Activated CD4-positive, alpha-beta memory T cell treated with anti-CD3 and anti-CD28 coated beads, Interleukin-2, amount 10 ng/mL, durations not matched to agents 7 days and 5 days (primary cell): ENCODE measurements at regions of chr22 and their contacts with region 1.

Region 1: DNA sequence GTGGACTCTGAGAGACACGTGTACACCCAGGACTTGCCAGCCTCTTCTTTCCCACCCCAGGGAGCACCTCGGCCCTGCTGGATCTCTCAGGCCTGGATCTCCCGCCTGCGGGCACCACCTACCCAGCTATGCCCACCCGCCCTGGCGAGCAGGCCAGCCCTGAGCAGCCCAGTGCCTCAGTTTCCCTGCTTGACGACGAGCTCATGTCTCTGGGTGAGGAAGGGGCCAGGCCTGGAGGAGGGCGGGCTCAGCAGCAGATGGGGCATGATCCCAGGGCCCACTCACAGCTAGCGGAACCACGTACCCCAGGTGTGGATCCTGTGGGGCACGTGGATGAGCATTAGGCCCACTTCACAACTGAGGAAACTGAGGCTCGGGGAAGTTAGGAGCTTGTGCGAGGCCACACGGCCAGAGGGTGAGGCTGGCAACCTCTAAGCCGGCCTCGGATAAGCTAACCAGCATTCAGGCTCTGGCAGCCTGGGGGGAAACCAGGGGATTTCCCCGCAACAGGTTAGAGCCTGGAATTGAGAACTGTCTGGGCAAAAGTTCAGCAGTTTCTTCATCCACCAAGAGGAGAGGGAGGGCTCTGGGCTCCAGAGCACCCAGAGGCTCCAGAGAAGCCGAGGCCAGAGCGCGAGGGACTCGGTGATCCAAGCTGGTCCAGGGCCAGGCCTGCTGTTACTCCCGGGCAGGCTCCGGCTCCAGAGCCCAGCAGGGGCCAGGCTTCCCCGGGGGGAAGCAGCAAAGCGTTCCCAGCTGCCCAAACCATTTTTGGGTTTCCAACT is 13.5 kb upstream of the SH3BP1 start:
- DNase-seq: no peak
- H3K4me3 Mint-ChIP-seq: no peak overlapping the region
- H3K27ac Mint-ChIP-seq: no peak overlapping the region
- H3K4me1 Mint-ChIP-seq: peaks cover 47% of the 10 kb centered on the region
- H3K27me3 Mint-ChIP-seq: no peaks in the 10 kb centered on the region

Region 2: GRCh38 chr22:37581504-37581903 is 44.4 kb before region 1 on chr22:
- CTCF ChIA-PET with region 1: no interaction called
- POLR2A ChIA-PET with region 1: no interaction called
- DNase-seq: no peak
- H3K4me3 Mint-ChIP-seq: no peak overlapping the region
- H3K27ac Mint-ChIP-seq: no peak overlapping the region
- H3K4me1 Mint-ChIP-seq: peaks cover 7% of the 10 kb centered on the region
- H3K27me3 Mint-ChIP-seq: peaks cover 17% of the 10 kb centered on the region

Region 3: GRCh38 chr22:37676736-37677492 is 51.0 kb after region 1 on chr22:
- CTCF ChIA-PET with region 1: interaction called, 301 read pairs
- POLR2A ChIA-PET with region 1: interaction called, 59 read pairs
- DNase-seq: peak; percentile 96
- H3K4me3 Mint-ChIP-seq: peak overlapping the region; percentile 88
- H3K27ac Mint-ChIP-seq: peak overlapping the region; percentile 99
- H3K4me1 Mint-ChIP-seq: peaks cover 62% of the 10 kb centered on the region
- H3K27me3 Mint-ChIP-seq: no peaks in the 10 kb centered on the region